ENCODE measurements at regions of chr1 and their contacts with region 1.

Region 1: GRCh38 chr1:2103266-2103898 is 53.2 kb downstream of the PRKCZ start:
- DNase-seq: no peak
- H3K4me3 ChIP-seq: no peak overlapping the region
- CTCF ChIP-seq: no peak
- POLR2A ChIP-seq: no peak

Region 2: GRCh38 chr1:2079396-2080085 is 23.8 kb before region 1 on chr1:
- intact Hi-C with region 1: loop called (anchors 1 kb)
- DNase-seq: no peak
- H3K4me3 ChIP-seq: no peak overlapping the region
- CTCF ChIP-seq: no peak
- POLR2A ChIP-seq: no peak

Region 3: DNA sequence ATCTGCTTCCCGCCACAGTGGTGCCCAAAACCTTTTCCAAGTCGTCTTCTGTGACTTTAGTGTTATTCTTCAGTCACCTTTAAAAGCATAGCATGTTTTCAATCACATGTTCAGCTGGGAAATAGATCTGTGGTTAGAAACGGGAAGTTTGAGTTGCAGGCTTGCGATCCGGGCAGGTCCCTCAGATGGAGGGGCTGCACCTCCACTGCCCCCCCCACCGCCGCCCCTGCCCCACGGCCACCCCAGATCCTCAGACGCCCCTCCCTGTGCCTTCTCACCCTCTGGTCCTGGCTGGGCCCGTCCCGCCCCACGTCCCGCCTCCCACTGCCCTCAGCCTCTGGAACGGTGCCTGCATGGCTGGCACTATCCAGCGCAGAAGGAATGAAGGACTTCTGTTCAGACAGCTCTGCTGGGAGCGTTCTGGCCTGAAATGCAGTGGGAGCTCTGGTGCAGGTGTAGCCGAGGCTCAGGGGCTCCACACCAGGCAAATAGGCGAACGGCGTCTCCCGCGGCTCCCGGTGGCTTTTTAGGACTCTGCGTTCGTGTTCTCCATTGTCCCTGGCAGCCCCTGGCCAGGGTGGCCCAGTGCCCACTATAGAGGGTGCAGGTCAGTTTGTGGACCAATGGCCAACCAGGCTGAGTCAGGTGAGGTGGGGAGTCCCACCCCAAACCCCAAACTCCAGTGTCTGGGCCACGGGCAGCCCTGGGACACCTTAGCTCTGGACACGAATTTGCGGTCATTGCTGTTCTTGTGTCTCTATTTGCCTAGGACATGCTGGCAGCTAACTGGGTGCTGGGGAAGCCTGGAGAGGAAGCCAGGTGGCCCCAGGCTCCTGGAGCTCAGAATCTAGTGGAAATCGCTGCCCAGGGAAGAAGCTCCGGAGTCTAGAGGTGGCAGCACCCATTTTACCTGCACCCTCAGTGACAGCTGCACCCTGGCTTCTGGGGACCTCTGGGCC is 24.1 kb after region 1 on chr1:
- intact Hi-C with region 1: no loop called
- DNase-seq: no peak
- H3K4me3 ChIP-seq: no peak overlapping the region
- CTCF ChIP-seq: no peak
- POLR2A ChIP-seq: no peak

Region 4: DNA sequence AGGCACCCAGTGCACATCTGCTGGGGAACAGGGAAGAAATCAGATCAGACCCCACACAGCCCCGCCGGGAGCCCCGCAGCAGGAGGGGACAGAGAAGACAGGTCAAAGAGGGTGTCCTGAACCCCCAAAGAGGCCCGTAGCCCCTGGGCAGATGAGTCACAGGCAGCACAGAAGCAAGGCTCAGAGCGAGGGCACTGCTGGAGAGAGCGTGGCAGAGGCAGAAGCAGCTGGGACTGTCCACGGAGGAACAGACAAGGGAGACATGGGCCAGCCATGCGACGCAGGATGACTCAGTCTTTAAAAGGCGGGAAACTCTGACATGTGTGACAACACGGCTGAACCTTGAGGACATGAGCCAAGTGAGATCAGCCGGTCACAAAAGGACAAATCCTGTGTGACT is 951.1 kb after region 1 on chr1:
- intact Hi-C with region 1: no loop called
- DNase-seq: peak in 1 of 2 donors; percentile 80
- H3K4me3 ChIP-seq: no peak overlapping the region
- CTCF ChIP-seq: no peak
- POLR2A ChIP-seq: no peak

Measured in lower leg skin (tissue), 4 donors.